CD8-positive, alpha-beta T cell (primary cell): ENCODE measurements at regions of chr3 and their contacts with region 1.

Region 1: DNA sequence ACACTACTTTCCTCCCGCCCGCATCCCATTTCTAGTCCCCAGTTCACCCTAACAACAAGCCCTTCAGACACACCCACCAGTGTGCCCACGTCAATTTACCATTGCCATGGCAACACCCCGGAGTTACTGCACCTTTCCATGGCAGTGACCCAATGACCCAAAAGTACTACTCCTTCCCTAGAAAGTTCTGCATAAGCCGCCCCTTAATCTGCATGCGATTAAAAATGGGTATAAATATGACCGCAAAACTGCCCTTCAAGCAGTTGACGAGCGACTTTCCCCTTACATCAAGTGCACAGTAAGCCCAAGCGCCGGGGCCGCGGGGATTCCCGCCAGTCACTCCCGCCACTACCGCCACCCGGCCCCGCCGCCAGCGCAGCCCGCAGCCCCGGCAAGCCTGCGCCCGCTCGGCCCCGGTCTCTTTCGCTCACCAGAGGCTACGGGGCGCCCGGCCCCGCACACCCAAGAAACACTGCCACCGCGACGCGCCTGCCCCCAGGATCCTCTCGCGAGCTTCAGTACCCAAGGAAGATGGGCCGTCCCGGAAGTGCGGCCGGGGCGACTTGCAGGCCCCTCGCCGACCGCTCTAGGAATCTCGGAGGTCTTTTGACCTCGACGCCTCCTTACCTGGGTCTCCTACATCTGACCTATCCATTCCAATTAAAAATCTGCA is 27.2 kb upstream of the ZNF502 start:
- DNase-seq: peak; percentile 8 to 77 (median 61)
- ATAC-seq: peak; percentile 74
- H3K4me3 ChIP-seq: peak overlapping the region; percentile 49 to 57
- H3K4me3 Mint-ChIP-seq: peak overlapping the region; percentile 82
- H3K27ac ChIP-seq: peak overlapping the region in 1 of 2 experiments; percentile 37
- H3K27ac Mint-ChIP-seq: peak overlapping the region; percentile 75
- H3K4me1 ChIP-seq: no peaks in the 10 kb centered on the region
- H3K4me1 Mint-ChIP-seq: peaks cover 20% of the 10 kb centered on the region
- H3K27me3 ChIP-seq: peaks cover 0 to 2% of the 10 kb centered on the region in 2 experiments
- H3K27me3 Mint-ChIP-seq: peaks cover 24% of the 10 kb centered on the region
- CTCF ChIP-seq: no peak

Region 2: GRCh38 chr3:44338010-44338827 is 347.0 kb before region 1 on chr3 and contains the start of gene TCAIM:
- CTCF ChIA-PET with region 1: no interaction called
- POLR2A ChIA-PET with region 1: no interaction called
- intact Hi-C with region 1: loop called in 1 of 2 experiments (anchors 1 kb)
- DNase-seq: peak; percentile 97 to 100 (median 99)
- ATAC-seq: peak; percentile 92
- H3K4me3 ChIP-seq: peak within 1 kb of the TSS; percentile 76 to 91
- H3K4me3 Mint-ChIP-seq: peak within 1 kb of the TSS; percentile 93
- H3K27ac ChIP-seq: peak within 1 kb of the TSS; percentile 88 to 93
- H3K27ac Mint-ChIP-seq: peak within 1 kb of the TSS; percentile 97
- H3K4me1 ChIP-seq: peaks cover 15% of the 10 kb centered on the region
- H3K4me1 Mint-ChIP-seq: peaks cover 32% of the 10 kb centered on the region
- H3K27me3 ChIP-seq: no peaks in the 10 kb centered on the region
- H3K27me3 Mint-ChIP-seq: peaks cover 6% of the 10 kb centered on the region
- CTCF ChIP-seq: no peak
- total RNA-seq, gene TCAIM: 3.1 to 3.7 TPM

Region 3: GRCh38 chr3:44501971-44502370 is 183.3 kb before region 1 on chr3:
- CTCF ChIA-PET with region 1: no interaction called
- POLR2A ChIA-PET with region 1: no interaction called
- intact Hi-C with region 1: loop called in 1 of 2 experiments (anchors 5 kb)
- DNase-seq: no peak
- ATAC-seq: no peak
- H3K4me3 ChIP-seq: no peak overlapping the region
- H3K4me3 Mint-ChIP-seq: no peak overlapping the region
- H3K27ac ChIP-seq: no peak overlapping the region
- H3K27ac Mint-ChIP-seq: no peak overlapping the region
- H3K4me1 ChIP-seq: no peaks in the 10 kb centered on the region
- H3K4me1 Mint-ChIP-seq: peaks cover 14% of the 10 kb centered on the region
- H3K27me3 ChIP-seq: no peaks in the 10 kb centered on the region
- H3K27me3 Mint-ChIP-seq: no peaks in the 10 kb centered on the region
- CTCF ChIP-seq: no peak

Region 4: DNA sequence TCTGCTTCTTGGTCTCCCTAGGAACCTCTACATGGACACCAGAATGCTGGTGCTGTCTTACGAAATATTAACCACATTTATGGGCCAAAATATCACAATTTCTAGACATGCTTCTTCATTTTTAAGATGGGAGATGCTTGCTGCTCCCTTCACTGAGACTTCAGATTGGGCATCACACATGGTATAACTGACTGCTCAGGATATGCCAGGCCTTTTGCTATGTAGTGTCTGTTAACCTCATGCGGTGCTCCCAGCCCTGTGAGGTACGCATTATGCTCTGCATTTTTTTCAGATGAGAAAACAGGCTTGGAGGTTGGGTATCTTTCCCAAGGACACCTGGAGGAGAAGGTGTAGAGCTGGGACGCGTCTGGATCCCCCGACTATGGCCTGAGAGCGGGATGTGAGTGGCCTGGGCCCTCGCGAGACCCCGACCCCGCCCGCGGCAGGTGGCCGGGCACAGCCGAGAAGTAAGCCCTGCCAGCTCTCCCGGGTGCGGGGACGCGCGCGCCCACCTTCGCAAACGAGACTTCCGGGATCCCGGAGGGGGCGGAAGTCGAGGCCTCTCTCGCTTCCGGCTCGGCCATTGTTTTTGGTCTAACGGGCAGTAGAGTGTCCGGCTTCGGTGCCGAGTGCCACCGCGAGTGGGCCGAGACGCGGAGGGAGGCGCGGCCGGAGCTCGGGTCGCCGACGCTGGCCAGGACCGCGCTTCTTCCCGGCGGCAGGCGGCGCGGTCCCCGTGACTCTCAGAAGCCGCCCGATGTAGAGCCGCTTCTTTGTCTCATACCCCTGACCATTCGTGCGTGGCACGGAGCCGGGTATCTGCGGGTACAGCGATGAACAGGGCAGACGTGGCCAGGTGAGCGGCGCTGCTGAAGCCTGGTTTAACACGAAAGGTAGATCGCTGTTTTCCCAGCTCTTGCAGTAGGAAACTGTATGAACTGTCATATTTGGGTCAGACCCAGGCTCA is 130.4 kb before region 1 on chr3 and contains the start of gene ZKSCAN7:
- CTCF ChIA-PET with region 1: no interaction called
- POLR2A ChIA-PET with region 1: interaction called, 4 read pairs
- intact Hi-C with region 1: loop called in 1 of 2 experiments (anchors 10 kb)
- DNase-seq: peak; percentile 20 to 79 (median 51)
- ATAC-seq: peak; percentile 74
- H3K4me3 ChIP-seq: peak within 1 kb of the TSS; percentile 76 to 88
- H3K4me3 Mint-ChIP-seq: peak within 1 kb of the TSS; percentile 93
- H3K27ac ChIP-seq: peak within 1 kb of the TSS; percentile 58 to 74
- H3K27ac Mint-ChIP-seq: peak within 1 kb of the TSS; percentile 92
- H3K4me1 ChIP-seq: peaks cover 9% of the 10 kb centered on the region
- H3K4me1 Mint-ChIP-seq: peaks cover 30% of the 10 kb centered on the region
- H3K27me3 ChIP-seq: no peaks in the 10 kb centered on the region
- H3K27me3 Mint-ChIP-seq: peaks cover 9% of the 10 kb centered on the region
- CTCF ChIP-seq: no peak
- total RNA-seq, gene ZKSCAN7: 0.68 to 1.6 TPM

Region 5: GRCh38 chr3:44648564-44649229 is 36.6 kb before region 1 on chr3 and contains the start of gene ZNF35:
- CTCF ChIA-PET with region 1: no interaction called
- POLR2A ChIA-PET with region 1: no interaction called
- intact Hi-C with region 1: loop called in 1 of 2 experiments (anchors 1 kb)
- DNase-seq: peak in 6 of 9 experiments; percentile 20 to 58 (median 36)
- ATAC-seq: peak; percentile 34
- H3K4me3 ChIP-seq: peak within 1 kb of the TSS; percentile 51 to 70
- H3K4me3 Mint-ChIP-seq: peak within 1 kb of the TSS; percentile 86
- H3K27ac ChIP-seq: peak within 1 kb of the TSS; percentile 20 to 65
- H3K27ac Mint-ChIP-seq: peak within 1 kb of the TSS; percentile 76
- H3K4me1 ChIP-seq: no peaks in the 10 kb centered on the region
- H3K4me1 Mint-ChIP-seq: peaks cover 23% of the 10 kb centered on the region
- H3K27me3 ChIP-seq: no peaks in the 10 kb centered on the region
- H3K27me3 Mint-ChIP-seq: no peaks in the 10 kb centered on the region
- CTCF ChIP-seq: no peak
- total RNA-seq, gene ZNF35: 1.7 to 2.8 TPM

Region 6: DNA sequence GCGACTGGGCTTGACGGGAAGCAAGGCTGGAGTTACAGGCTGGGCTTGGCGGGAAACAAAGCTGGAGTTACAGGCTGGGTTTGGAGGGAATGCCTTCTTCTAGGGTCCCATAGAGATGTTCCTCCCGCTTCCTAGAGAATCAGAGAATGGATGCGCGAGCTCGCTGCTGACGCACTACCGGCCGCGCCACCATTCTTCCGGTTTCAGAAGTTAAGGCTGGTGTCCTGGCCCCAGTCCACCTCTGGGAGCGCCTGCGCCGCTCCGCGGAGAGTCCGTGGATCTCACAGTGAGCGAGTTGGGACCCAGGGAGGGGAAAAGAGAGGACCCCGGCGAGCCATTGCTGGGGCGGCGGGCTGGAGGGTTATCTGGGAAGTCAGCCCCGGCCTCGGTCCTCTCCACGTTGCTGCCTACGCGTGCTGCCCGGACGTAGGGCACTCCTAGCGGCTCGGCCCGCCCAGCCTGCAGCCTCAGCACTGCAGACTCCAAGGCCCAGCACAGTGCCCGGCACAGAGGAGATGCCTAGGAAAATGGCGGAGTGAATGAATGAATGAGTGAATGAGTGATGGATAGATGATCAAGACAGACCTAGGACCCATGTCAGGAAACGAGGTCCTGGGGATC is 27.3 kb after region 1 on chr3 and contains the start of gene ZNF502:
- CTCF ChIA-PET with region 1: no interaction called
- POLR2A ChIA-PET with region 1: interaction called, 5 read pairs
- intact Hi-C with region 1: loop called in 1 of 2 experiments (anchors 1 kb)
- DNase-seq: peak; percentile 6 to 80 (median 70)
- ATAC-seq: peak; percentile 90
- H3K4me3 ChIP-seq: peak within 1 kb of the TSS; percentile 59 to 77
- H3K4me3 Mint-ChIP-seq: peak within 1 kb of the TSS; percentile 93
- H3K27ac ChIP-seq: peak within 1 kb of the TSS; percentile 32 to 66
- H3K27ac Mint-ChIP-seq: peak within 1 kb of the TSS; percentile 90
- H3K4me1 ChIP-seq: no peaks in the 10 kb centered on the region
- H3K4me1 Mint-ChIP-seq: peaks cover 18% of the 10 kb centered on the region
- H3K27me3 ChIP-seq: peaks cover 0 to 2% of the 10 kb centered on the region in 2 experiments
- H3K27me3 Mint-ChIP-seq: peaks cover 25% of the 10 kb centered on the region
- CTCF ChIP-seq: peak; percentile 26
- total RNA-seq, gene ZNF502: 5.8 to 6.3 TPM